ENCODE measurements at regions of chr16 and their contacts with region 1.

Region 1: DNA sequence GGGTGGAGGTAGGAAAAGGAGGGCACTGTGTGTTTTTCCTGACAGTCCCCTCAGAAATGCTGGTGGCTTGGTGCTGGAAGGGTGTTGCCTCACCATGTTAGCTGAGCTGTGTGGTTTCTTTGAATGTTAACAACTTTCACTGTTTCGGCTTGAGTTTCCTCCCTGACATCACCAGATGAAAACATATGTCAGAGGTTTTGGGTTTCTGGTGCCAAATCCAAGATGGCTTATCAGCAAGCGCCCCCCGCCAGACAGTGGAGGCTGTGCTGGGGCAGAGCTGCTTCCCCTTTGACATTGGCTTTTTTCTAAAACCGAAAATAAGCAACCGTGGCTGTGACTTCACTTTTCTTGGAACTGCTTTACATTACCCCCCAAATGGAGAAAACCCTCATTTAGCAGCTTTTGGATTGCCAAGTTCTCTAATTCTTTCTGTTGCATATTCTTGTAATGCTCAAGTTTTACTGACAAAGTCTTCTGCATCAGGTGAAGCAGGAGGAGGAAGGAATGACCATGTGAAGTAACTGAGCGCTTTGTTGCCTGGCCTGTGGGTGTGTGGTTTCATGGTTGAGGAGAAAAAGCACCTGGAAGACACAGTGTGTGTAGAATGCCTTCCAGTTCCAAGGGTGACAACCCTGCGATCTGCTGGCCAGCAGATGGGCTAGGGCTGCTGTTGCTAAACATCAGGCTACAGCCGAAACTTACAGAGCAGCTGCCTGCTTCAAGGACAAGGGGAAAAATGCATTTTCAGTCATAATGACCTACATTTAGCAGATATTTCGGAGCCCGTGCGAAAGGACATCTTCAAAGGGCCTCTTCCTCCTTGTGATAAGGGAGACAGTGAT is 9.7 kb downstream of the RMI2 start:
- DNase-seq: peak in 1 of 2 donors; percentile 72
- H3K4me3 ChIP-seq: no peak overlapping the region
- H3K27ac ChIP-seq: peak overlapping the region in 3 of 5 donors; percentile 8 to 73 (median 34)
- H3K4me1 ChIP-seq: peaks cover 15 to 48% (median 28%) of the 10 kb centered on the region in 4 donors
- H3K27me3 ChIP-seq: peaks cover 0 to 20% (median 0%) of the 10 kb centered on the region in 3 donors
- CTCF ChIP-seq: no peak
- EP300 ChIP-seq: no peak
- POLR2A ChIP-seq: no peak

Region 2: GRCh38 chr16:10965440-10966061 is 389.4 kb before region 1 on chr16:
- intact Hi-C with region 1: loop called (anchors 5 kb)
- DNase-seq: no peak
- H3K4me3 ChIP-seq: no peak overlapping the region
- H3K27ac ChIP-seq: no peak overlapping the region
- H3K4me1 ChIP-seq: peaks cover 15 to 21% (median 18%) of the 10 kb centered on the region in 4 donors
- H3K27me3 ChIP-seq: no peaks in the 10 kb centered on the region
- CTCF ChIP-seq: no peak
- EP300 ChIP-seq: no peak
- POLR2A ChIP-seq: no peak